ENCODE measurements at regions of chr20 and their contacts with region 1.

Region 1: GRCh38 chr20:58980700-58981627 is at the start of gene NELFCD:
- DNase-seq: peak; percentile 99

Region 2: DNA sequence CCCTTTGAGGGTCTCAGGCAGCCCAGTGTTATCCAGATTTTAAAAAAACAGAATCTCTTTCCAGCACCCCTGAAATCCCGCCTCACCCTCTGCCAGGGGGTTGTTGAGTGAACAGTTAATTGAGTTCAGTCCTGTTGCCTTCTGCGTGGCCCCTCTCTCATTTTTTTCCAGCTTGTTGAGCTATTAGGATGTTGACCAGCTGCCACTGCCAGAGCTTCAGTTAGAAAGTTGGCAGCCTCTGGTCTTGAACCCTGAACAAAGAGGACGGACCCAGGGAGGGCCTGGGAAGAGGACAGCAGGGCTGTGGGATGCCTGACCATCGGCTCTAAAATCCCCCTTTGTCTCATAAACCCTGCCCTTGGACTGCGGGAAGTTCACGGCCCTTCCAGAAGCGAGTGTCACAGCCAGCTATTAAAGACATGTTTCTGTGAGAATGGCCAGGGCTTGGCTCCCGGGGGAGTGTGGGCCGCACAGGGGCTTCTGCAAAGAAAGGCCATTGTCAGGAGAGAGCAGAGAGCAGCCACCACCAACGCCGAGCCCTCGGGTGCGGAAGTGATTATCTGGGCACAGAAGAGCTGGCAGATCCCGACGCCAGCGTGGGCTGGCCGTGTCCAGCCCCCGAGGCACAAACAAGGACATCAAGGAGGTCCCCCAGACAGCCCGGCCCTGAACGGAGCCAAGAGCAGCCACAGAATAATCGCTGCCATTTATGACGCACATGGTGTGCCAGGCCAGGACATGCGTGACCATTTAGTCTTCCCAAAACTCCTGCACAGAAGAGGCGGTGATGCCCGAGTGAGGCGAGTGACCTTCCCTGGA is 941.5 kb before region 1 on chr20:
- CTCF ChIA-PET with region 1: no interaction called
- POLR2A ChIA-PET with region 1: no interaction called
- DNase-seq: no peak

Region 3: GRCh38 chr20:58993332-58994201 is 12.6 kb after region 1 on chr20:
- CTCF ChIA-PET with region 1: no interaction called
- POLR2A ChIA-PET with region 1: interaction called, 19 read pairs
- DNase-seq: no peak

Region 4: GRCh38 chr20:59003851-59004431 is 23.0 kb after region 1 on chr20:
- CTCF ChIA-PET with region 1: no interaction called
- POLR2A ChIA-PET with region 1: no interaction called
- DNase-seq: no peak

Region 5: GRCh38 chr20:59042796-59043660 is 62.1 kb after region 1 on chr20:
- CTCF ChIA-PET with region 1: no interaction called
- POLR2A ChIA-PET with region 1: no interaction called
- DNase-seq: peak; percentile 98

Region 6: DNA sequence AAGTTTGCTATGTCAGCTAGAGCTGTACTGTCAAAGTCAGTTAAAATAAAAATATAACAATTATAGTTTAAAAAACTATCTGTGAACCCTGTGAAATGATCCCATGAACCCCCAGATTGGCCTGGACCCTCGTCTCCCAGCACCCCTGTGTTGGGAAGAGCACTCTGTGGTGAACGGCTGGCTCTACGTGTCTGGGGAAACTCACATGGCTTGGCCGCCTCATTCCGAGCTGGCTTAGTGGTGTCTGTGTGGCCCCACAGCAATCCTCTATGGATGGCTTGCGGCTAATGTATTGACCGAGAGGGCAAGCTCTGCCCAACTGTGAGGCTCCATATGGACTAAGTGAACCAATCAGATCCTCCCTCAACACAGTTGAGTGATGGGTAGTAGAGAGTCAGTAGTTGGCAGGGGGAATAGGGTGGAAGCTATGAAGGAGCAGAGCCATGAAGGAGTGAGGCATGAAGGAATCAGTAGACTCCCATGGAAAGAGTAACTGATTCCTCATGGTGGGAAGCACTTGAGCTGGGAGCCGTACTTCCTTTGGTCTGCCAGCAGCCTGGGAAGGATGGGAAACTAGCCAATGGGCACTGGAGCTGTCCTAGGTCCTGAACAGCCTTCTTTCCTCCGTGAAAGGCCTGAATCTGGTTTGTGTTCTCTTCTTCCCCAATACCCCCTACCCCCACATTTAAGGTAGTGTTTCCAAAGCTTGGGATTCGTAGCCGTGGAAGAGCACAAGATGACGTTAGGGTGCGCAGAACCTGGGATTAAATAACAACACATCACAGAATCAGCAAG is 161.0 kb after region 1 on chr20:
- CTCF ChIA-PET with region 1: no interaction called
- POLR2A ChIA-PET with region 1: no interaction called
- DNase-seq: peak; percentile 34